Activated T-helper 2 cell treated with anti-CD3 and anti-CD28 coated beads, Interferon-gamma antibody, Interleukin-2, Interleukin-4, amounts not matched to agents 10 μg/mL and 5 μg/mL and 100 μg/mL, durations not matched to agents 14 hours and 24 hours and 36 hours (primary cell): ENCODE measurements at regions of chr9 and their contacts with region 1.

Region 1: GRCh38 chr9:129988607-129989361 is 54.2 kb downstream of the FNBP1 start:
- DNase-seq: no peak
- H3K4me3 Mint-ChIP-seq: peak overlapping the region; percentile 50
- H3K27ac Mint-ChIP-seq: peak overlapping the region; percentile 87
- H3K4me1 Mint-ChIP-seq: peaks cover 46% of the 10 kb centered on the region
- H3K27me3 Mint-ChIP-seq: no peaks in the 10 kb centered on the region

Region 2: DNA sequence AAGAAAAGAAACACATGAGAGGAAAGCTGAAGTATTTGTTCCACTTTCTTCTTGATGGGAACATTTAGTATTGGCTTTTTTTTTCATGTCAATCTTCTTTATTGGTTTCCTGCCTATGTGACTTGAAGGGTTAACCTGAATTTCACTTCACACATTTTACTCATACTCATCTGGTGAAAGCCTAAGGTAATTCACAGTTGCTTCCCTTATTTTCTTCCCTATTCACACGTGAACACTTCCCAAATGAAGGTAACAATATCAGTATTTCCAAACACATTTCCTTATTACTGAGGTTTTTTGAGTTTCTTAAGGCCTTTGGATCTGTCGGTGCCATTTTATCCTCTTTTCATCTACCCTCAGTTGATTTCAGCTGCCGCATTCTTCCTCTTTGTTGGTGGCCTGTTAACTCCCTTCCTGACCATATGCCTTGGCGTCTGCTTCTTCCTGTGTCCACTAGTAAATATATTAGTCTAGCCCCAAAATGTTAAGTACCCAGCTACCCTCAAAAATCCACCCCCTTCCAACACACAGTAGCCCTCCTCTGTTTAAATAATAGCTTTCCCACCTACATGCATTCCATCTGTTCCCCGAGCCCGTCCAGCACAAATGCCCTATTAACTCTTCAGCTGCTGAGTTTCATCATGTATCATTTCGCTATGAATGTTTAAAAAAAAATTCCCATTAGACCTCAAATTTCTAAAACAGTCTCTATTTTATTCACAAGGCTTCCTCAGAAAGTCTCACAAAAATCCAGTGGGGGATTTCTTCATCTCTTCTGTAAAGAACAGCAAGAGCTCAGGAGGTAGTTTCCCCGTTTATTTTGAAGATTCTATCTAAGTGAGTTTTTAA is 56.3 kb before region 1 on chr9:
- intact Hi-C with region 1: loop called (anchors 2 kb)
- DNase-seq: no peak
- H3K4me3 Mint-ChIP-seq: peak overlapping the region; percentile 59
- H3K27ac Mint-ChIP-seq: peak overlapping the region; percentile 86
- H3K4me1 Mint-ChIP-seq: peaks cover 61% of the 10 kb centered on the region
- H3K27me3 Mint-ChIP-seq: no peaks in the 10 kb centered on the region

Region 3: DNA sequence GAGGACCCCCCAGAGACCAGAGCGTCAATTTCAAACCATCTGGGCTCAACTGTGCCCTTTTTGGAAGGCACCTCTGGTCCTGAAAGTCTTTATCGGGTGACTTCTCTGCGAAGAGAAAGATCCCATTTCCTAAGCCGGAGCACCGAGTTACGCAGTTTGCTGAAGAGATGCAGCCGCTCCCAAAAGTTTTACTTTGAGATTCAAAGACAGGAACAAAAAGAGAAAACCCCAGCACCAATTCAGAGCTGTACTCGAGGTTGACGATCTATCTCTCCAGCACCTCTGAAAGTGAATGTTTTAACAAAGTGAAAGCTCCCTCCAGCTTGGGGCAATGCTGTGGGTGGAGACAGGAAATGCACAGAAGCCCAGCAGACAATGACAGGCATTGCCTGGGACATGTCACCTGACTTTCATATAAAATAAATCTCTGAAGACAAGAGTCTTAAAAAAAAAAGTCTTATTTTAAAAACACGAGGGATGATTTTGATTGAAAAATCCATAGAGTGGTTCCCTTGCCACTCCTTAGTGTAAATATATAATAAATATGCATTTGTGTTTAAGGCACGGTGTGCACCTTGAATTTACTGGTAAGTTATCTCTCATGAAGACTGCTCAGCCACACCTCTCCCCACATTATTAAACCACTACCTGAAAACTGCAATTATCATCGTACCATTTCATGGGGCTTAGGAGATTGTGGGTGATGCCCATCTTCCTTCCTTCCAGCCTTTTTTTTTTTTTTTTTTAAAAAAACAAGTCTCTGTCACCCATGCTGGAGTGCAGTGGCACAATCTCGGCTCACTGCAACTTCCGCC is 25.7 kb before region 1 on chr9:
- intact Hi-C with region 1: loop called (anchors 2 kb)
- DNase-seq: peak; percentile 76
- H3K4me3 Mint-ChIP-seq: peak overlapping the region; percentile 80
- H3K27ac Mint-ChIP-seq: peak overlapping the region; percentile 89
- H3K4me1 Mint-ChIP-seq: peaks cover 67% of the 10 kb centered on the region
- H3K27me3 Mint-ChIP-seq: no peaks in the 10 kb centered on the region

Region 4: DNA sequence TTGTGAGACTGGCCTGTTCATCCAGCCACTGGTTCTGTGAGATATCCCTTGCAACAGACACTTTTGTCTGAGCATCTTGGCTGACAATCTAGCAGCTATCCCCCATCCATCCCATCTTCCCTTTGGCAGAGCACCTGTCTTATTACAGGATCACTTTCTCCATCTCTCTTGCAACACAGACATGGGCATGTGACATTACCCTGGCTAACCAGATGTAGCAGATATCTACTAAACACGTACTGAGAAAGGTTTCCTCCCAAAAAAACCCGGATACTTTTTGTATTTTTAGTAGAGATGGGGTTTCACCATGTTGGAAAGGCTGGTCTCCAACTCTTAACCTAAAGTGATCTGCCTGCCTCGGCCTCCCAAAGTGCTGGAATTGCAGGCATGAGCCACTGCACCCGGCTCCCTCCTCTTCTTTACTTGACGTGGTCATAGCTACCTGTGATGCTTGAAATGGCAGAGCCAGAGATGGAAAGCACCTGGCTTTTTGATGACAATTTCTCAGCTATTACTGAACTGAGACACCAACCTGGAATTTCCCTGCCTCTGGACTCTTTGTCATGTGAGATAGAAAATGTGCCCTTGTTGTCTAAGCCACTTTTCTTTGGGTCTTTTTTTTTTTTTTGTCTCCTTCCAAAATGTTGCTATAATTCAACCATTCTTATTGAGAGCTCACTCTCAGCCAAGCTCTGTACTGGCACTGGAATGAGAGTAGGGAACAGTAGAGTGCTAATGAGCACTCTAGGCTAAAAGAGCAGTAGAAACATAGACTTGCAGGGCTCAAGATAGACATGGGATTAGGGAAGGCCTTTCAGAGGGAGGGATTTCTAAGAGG is 21.6 kb after region 1 on chr9:
- intact Hi-C with region 1: loop called (anchors 2 kb)
- DNase-seq: no peak
- H3K4me3 Mint-ChIP-seq: peak overlapping the region; percentile 55
- H3K27ac Mint-ChIP-seq: peak overlapping the region; percentile 95
- H3K4me1 Mint-ChIP-seq: peaks cover 61% of the 10 kb centered on the region
- H3K27me3 Mint-ChIP-seq: no peaks in the 10 kb centered on the region

Region 5: DNA sequence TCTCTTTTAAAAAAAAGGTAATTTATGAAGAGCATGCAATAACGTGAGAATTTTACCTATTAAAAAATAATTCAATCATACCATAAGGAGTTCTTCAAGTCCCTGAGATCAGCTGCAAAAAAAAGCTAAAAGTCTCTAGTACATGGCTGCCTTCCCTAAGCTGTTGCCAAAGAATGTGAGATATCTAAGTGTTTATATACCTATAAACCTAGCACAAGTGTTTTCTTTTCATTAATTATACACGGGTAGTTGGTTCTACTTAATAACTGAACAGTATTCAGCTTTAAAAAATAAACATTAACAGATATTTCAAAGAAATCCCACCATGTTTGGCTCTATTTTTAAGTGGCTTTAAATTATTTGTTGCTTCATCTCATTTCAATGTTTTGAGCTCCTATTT is 28.3 kb after region 1 on chr9:
- intact Hi-C with region 1: loop called (anchors 1 kb)
- DNase-seq: no peak
- H3K4me3 Mint-ChIP-seq: peak overlapping the region; percentile 51
- H3K27ac Mint-ChIP-seq: peak overlapping the region; percentile 99
- H3K4me1 Mint-ChIP-seq: peaks cover 49% of the 10 kb centered on the region
- H3K27me3 Mint-ChIP-seq: no peaks in the 10 kb centered on the region

Region 6: GRCh38 chr9:130029223-130029973 is 40.6 kb after region 1 on chr9:
- intact Hi-C with region 1: loop called (anchors 2 kb)
- DNase-seq: no peak
- H3K4me3 Mint-ChIP-seq: peak overlapping the region; percentile 65
- H3K27ac Mint-ChIP-seq: peak overlapping the region; percentile 95
- H3K4me1 Mint-ChIP-seq: peaks cover 85% of the 10 kb centered on the region
- H3K27me3 Mint-ChIP-seq: no peaks in the 10 kb centered on the region